CD4-positive, alpha-beta memory T cell (primary cell): ENCODE measurements at regions of chr1 and their contacts with region 1.

Region 1: GRCh38 chr1:89524369-89525168 is at the start of gene LRRC8B:
- DNase-seq: peak; percentile 85 to 90 (median 88)
- H3K4me3 ChIP-seq: peak within 1 kb of the TSS; percentile 91 to 93
- H3K4me3 Mint-ChIP-seq: peak within 1 kb of the TSS in 5 of 8 donors; percentile 82 to 97 (median 87)
- H3K27ac ChIP-seq: peak within 1 kb of the TSS; percentile 92
- H3K27ac Mint-ChIP-seq: peak within 1 kb of the TSS in 6 of 7 donors; percentile 91 to 98 (median 96)
- H3K4me1 ChIP-seq: peaks cover 50% of the 10 kb centered on the region
- H3K4me1 Mint-ChIP-seq: peaks cover 11 to 21% (median 14%) of the 10 kb centered on the region in 4 donors
- H3K27me3 ChIP-seq: no peaks in the 10 kb centered on the region
- H3K27me3 Mint-ChIP-seq: no peaks in the 10 kb centered on the region
- total RNA-seq, gene LRRC8B: 15.6 to 18.1 TPM

Region 2: DNA sequence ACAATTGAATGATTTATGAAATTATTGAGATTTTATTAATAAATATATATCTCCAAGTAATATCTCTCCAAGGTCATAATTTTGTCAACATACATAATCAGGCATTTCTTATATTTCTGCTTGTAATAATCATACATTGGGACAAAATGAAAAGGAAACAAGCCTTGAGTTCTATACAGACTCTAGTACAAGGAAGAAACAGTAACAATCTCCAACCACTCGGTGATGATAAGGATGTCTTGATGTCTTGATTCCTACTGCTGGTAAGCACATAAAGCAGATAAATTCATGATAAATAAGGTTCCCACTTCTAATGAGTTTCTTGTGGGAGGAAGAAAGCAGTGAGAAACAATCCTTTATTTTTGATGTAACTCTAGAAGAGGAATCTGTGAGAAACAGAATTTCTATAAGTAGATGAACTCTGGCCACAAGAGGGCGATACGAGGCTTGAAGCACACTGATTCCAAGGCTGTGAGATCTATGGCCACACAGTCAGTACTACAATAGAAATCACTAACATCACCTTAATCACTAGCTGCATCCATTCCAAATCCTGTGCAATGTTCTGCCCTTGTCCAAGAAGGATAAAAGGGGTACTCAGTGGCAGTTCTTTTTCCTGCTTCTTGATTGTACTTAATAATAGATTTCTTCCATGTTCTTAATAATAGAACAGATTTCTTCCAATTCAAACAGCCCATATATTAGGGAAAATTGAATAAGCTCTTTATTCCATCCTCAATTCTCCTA is 41.4 kb before region 1 on chr1:
- CTCF ChIA-PET with region 1: interaction called, 6 read pairs
- POLR2A ChIA-PET with region 1: no interaction called
- intact Hi-C with region 1: loop called (anchors 2 kb)
- DNase-seq: peak; percentile 63 to 79 (median 68)
- H3K4me3 ChIP-seq: no peak overlapping the region
- H3K4me3 Mint-ChIP-seq: no peak overlapping the region
- H3K27ac ChIP-seq: no peak overlapping the region
- H3K27ac Mint-ChIP-seq: no peak overlapping the region
- H3K4me1 ChIP-seq: no peaks in the 10 kb centered on the region
- H3K4me1 Mint-ChIP-seq: peaks cover 0 to 10% (median 10%) of the 10 kb centered on the region in 4 donors
- H3K27me3 ChIP-seq: no peaks in the 10 kb centered on the region
- H3K27me3 Mint-ChIP-seq: no peaks in the 10 kb centered on the region

Region 3: GRCh38 chr1:89598450-89599331 is 74.1 kb after region 1 on chr1:
- CTCF ChIA-PET with region 1: interaction called, 17 read pairs
- POLR2A ChIA-PET with region 1: interaction called, 13 read pairs
- intact Hi-C with region 1: loop called (anchors 1 kb)
- DNase-seq: peak in 4 of 5 donors; percentile 32 to 49 (median 38)
- H3K4me3 ChIP-seq: no peak overlapping the region
- H3K4me3 Mint-ChIP-seq: peak overlapping the region in 5 of 8 donors; percentile 37 to 79 (median 45)
- H3K27ac ChIP-seq: no peak overlapping the region
- H3K27ac Mint-ChIP-seq: peak overlapping the region; percentile 19 to 81 (median 71)
- H3K4me1 ChIP-seq: peaks cover 64% of the 10 kb centered on the region
- H3K4me1 Mint-ChIP-seq: peaks cover 55 to 82% (median 74%) of the 10 kb centered on the region in 4 donors
- H3K27me3 ChIP-seq: no peaks in the 10 kb centered on the region
- H3K27me3 Mint-ChIP-seq: no peaks in the 10 kb centered on the region

Region 4: DNA sequence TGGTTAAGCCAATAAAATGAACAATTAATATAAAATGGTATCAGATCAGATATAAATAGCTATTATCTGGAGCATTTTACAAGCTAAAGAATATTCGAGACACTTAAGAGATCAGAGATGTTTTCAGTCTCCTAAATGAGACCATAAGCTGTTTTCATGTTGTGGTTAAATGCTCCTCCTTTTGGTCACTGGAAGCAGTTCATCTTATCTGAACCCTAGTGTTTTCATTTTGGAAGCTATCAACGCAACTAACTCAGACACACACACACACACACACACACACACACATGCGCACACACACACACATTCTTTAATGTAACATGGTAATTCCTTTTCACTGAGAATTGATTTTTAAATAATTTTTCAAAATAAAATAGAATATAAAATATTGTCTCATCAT is 98.3 kb after region 1 on chr1:
- CTCF ChIA-PET with region 1: interaction called, 51 read pairs
- POLR2A ChIA-PET with region 1: interaction called, 7 read pairs
- intact Hi-C with region 1: loop called (anchors 1 kb)
- DNase-seq: peak; percentile 35 to 56 (median 43)
- H3K4me3 ChIP-seq: no peak overlapping the region
- H3K4me3 Mint-ChIP-seq: peak overlapping the region in 2 of 8 donors; percentile 36 to 49
- H3K27ac ChIP-seq: no peak overlapping the region
- H3K27ac Mint-ChIP-seq: peak overlapping the region in 5 of 7 donors; percentile 60 to 95 (median 70)
- H3K4me1 ChIP-seq: peaks cover 54% of the 10 kb centered on the region
- H3K4me1 Mint-ChIP-seq: peaks cover 41 to 75% (median 54%) of the 10 kb centered on the region in 4 donors
- H3K27me3 ChIP-seq: no peaks in the 10 kb centered on the region
- H3K27me3 Mint-ChIP-seq: no peaks in the 10 kb centered on the region

Region 5: DNA sequence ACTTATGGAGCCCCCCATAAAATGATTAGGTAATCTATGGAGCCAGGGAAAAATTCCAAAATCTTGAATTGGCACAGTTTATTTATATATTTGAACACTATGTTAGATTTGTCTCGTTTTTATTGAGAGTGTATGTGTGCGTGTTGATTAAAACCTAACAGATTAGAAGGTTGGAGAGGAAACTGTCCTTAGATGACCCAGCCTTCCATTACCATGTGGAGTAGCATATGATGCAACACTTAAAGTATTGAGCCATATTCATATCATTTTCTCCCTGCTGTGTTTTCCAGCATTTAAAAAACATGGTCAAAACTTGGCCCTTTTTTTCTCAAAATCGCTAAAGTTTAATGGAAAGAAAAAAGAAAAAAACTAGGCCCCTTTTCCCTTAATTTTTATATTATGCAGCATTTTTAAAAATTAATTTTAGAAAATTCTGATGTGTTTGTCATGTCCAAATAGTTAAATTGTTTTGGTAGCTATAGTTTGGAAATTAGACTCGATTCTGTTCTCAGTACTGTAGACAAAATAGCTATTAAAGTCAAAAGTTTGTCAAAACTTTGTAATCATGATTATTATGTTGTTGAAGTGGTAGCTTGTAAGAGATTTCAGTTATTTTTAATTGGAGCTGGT is 298.5 kb after region 1 on chr1:
- CTCF ChIA-PET with region 1: no interaction called
- POLR2A ChIA-PET with region 1: no interaction called
- intact Hi-C with region 1: no loop called
- DNase-seq: no peak
- H3K4me3 ChIP-seq: no peak overlapping the region
- H3K4me3 Mint-ChIP-seq: no peak overlapping the region
- H3K27ac ChIP-seq: no peak overlapping the region
- H3K27ac Mint-ChIP-seq: peak overlapping the region in 5 of 7 donors; percentile 0 to 51 (median 11)
- H3K4me1 ChIP-seq: peaks cover 11% of the 10 kb centered on the region
- H3K4me1 Mint-ChIP-seq: peaks cover 23 to 32% (median 26%) of the 10 kb centered on the region in 4 donors
- H3K27me3 ChIP-seq: no peaks in the 10 kb centered on the region
- H3K27me3 Mint-ChIP-seq: no peaks in the 10 kb centered on the region

Region 6: GRCh38 chr1:89994805-89995597 is 470.4 kb after region 1 on chr1 and contains the start of gene ZNF326:
- CTCF ChIA-PET with region 1: no interaction called
- POLR2A ChIA-PET with region 1: no interaction called
- intact Hi-C with region 1: loop called (anchors 1 kb)
- DNase-seq: peak; percentile 89 to 96 (median 92)
- H3K4me3 ChIP-seq: peak within 1 kb of the TSS; percentile 77 to 95
- H3K4me3 Mint-ChIP-seq: peak within 1 kb of the TSS; percentile 92 to 100 (median 98)
- H3K27ac ChIP-seq: peak within 1 kb of the TSS; percentile 83
- H3K27ac Mint-ChIP-seq: peak within 1 kb of the TSS; percentile 87 to 99 (median 95)
- H3K4me1 ChIP-seq: peaks cover 36% of the 10 kb centered on the region
- H3K4me1 Mint-ChIP-seq: peaks cover 21 to 41% (median 31%) of the 10 kb centered on the region in 4 donors
- H3K27me3 ChIP-seq: no peaks in the 10 kb centered on the region
- H3K27me3 Mint-ChIP-seq: no peaks in the 10 kb centered on the region
- total RNA-seq, gene ZNF326: 17.4 to 20.6 TPM